ENCODE measurements at regions of chr2 and their contacts with region 1.

Region 1: DNA sequence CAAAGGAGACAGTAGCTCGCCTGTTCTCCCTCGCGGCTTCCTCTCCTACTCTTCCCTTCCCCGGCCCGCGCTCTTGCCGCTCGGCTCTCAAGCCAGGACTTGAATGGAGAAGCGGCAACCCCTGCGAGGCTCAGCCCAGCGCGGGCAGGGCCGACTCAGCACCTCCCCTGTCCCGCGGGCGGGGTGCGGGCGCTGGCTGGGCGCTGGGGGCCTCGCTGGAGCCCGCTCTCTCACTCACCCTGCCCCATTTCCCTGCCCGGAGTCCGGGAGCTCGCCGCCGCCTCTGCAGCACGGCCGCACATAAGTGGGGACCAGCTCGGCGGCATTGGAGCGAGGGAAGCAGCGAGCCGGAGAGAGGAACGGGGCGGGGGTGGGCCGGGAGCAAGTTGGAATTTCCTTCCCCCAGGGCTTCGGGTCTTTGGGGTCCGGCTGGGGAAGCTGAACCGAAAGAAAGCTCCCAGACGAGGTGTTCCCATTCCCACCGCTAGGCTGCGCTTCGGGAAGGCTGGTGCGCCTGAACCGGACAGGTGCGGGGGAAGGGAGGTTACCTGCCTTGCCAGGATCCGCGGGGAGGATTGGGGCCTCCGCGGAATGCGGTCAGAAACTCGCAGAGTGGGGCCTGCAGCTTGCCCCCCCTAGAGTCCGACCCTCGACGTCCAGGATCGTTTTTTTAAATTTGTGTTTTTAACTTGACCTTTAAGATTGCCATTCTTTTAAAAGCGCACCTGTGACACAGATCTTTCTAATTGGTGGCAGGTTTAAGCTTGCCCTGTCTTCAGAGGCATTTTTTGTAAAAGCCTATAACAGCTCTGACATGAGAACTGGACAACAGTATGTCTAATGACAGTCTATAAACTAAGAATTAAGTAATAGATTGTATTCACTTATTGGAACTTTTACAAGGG is at the start of gene COBLL1:
- DNase-seq: peak; percentile 82
- H3K4me3 ChIP-seq: peak within 1 kb of the TSS; percentile 72 to 92
- H3K27ac ChIP-seq: peak within 1 kb of the TSS; percentile 81 to 85
- H3K4me1 ChIP-seq: peaks cover 8 to 10% of the 10 kb centered on the region in 2 experiments; a peak in 3 of 4 replicates
- H3K27me3 ChIP-seq: no peaks in the 10 kb centered on the region
- CTCF ChIP-seq: peak; percentile 80
- EP300 ChIP-seq: no peak
- RAD21 ChIP-seq: peak; percentile 50
- polyA plus RNA-seq, gene COBLL1: 3.1 and 4.9 TPM in 2 replicates

Region 2: DNA sequence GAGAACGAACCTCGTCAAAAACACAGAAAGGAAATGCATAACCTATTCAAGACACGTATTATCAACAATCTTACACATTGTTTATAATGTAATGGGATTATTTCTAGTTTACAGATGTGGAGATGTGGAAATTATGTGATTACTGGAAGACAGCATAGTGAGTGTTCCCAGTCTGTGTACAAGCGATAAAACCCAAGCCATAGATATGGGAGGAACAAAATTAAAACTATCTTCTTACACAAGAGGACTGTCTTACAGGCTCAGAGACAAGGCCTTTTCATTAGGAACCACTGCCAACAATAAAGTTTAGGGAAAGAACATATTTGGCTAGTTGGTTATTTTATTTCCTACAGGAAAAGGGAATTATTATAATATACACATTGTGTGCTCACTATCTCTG is 20.6 kb before region 1 on chr2:
- CTCF ChIA-PET with region 1: interaction called, 22 read pairs
- POLR2A ChIA-PET with region 1: no interaction called
- DNase-seq: no peak
- H3K4me3 ChIP-seq: no peak overlapping the region
- H3K27ac ChIP-seq: no peak overlapping the region
- H3K4me1 ChIP-seq: peaks cover 2 to 22% of the 10 kb centered on the region in 2 experiments; a peak in 3 of 4 replicates
- H3K27me3 ChIP-seq: no peaks in the 10 kb centered on the region
- CTCF ChIP-seq: no peak
- EP300 ChIP-seq: no peak
- RAD21 ChIP-seq: no peak

Region 3: GRCh38 chr2:164831887-164832286 is 10.1 kb before region 1 on chr2:
- CTCF ChIA-PET with region 1: interaction called, 35 read pairs
- POLR2A ChIA-PET with region 1: interaction called, 3 read pairs
- DNase-seq: no peak
- H3K4me3 ChIP-seq: no peak overlapping the region
- H3K27ac ChIP-seq: no peak overlapping the region
- H3K4me1 ChIP-seq: peaks cover 1 to 2% of the 10 kb centered on the region in 2 experiments; a peak in 3 of 4 replicates
- H3K27me3 ChIP-seq: no peaks in the 10 kb centered on the region
- CTCF ChIP-seq: no peak
- EP300 ChIP-seq: no peak
- RAD21 ChIP-seq: no peak

Region 4: DNA sequence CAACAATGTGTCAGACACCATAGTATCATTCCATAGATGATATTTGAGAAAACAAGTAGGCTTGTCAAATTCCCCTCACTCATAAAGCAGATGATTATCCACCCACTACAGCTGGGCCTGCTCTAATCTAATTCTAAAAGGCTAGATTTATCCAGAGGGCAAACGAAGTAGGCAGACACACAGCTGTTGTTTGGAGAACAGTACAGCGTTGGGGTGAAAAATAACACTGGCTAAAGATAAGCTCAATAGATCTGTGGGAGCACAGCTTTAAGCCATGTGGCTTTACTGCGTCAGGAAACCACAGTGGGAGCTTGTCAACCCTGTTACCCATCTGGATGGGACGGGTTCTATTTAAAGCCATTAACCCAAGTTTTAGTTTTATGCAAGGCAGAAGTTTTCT is 48.6 kb after region 1 on chr2:
- CTCF ChIA-PET with region 1: interaction called, 15 read pairs
- POLR2A ChIA-PET with region 1: interaction called, 4 read pairs
- DNase-seq: peak; percentile 53
- H3K4me3 ChIP-seq: no peak overlapping the region
- H3K27ac ChIP-seq: peak overlapping the region in 1 of 2 experiments; percentile 24; a peak in 2 of 4 replicates
- H3K4me1 ChIP-seq: peaks cover 0 to 8% of the 10 kb centered on the region in 2 experiments; a peak in 2 of 4 replicates
- H3K27me3 ChIP-seq: no peaks in the 10 kb centered on the region
- CTCF ChIP-seq: no peak
- EP300 ChIP-seq: peak in 1 of 2 experiments; percentile 95; a peak in 2 of 4 replicates
- RAD21 ChIP-seq: peak; percentile 27

Region 5: DNA sequence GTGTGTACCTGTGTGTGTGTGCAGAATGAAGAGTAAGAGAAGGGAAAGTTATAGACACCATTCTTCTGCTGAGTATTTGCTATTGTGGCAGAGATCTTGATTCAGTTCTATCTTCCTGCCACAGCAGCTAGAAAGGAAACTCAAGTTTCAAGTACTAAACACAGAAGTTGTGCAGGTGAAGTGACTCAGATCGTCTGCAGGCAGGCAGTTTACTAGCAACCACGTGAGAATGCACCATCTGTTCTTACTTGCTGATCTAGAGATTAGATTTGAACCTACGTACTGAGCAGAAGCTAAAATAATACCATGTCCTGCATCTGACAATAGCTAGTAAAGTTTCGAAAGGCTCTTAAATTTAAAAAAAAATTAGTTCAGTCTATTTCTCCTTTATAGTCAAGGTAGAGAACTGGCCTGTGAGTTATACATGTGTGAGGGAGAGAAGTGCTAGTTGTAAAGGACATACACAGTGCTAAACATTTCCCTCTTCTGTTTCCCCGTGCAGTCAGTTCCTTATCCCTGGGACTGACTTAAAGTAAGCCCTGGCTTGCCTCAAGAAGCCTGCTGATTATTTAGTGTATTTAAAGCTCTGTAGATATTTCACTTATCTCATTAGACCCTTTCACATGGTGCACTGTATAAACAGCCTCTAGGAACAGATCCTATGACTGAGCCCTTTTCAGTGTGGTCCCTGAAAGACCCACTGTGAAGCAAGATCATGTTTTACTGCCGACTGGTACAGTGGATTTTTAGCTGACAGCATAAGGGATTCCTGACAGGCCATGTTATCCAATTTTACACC is 68.3 kb after region 1 on chr2:
- CTCF ChIA-PET with region 1: interaction called, 12 read pairs
- POLR2A ChIA-PET with region 1: no interaction called
- DNase-seq: no peak
- H3K4me3 ChIP-seq: no peak overlapping the region
- H3K27ac ChIP-seq: peak overlapping the region in 1 of 2 experiments; percentile 83; a peak in 2 of 4 replicates
- H3K4me1 ChIP-seq: peaks cover 0 to 18% of the 10 kb centered on the region in 2 experiments; a peak in 2 of 4 replicates
- H3K27me3 ChIP-seq: no peaks in the 10 kb centered on the region
- CTCF ChIP-seq: no peak
- EP300 ChIP-seq: peak; percentile 56 to 70; a peak in 3 of 4 replicates
- RAD21 ChIP-seq: no peak

Region 6: DNA sequence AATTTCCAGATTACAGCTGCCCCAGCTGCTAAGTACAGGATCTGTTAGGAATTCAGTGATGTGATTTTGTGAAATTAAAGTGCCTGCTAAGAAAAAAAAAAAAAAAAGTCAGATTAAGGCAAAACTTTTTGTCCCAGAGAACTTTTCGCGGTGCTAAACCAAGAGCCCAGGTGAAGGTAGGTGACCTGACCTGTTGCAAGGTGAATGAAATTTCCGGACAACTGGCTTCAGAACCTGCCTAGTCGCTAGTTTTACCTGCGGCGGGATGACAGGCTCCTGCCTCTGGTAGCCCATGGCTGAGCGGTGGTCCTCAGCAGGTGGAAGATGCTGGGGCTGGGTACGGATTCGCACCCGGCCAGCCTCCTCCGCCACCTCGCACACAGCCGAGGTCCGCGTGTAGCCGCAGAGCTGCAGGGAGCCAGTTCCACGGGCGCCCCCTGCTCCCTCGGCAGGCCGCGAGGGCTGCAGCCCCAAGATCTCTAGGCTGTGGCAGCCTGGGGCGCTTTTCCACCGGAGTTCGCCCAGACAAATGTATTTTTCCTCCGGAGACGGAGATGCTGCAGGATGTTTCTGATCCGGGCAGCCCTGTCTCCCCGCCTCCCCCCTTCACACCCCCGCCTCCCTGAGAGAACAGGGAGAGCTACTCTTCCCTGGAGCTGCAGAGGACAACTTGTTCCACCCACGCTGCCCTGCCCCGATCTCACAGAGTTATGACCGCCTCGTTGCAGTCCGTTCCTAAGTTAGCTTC is 113.2 kb after region 1 on chr2 and contains the start of gene SLC38A11:
- CTCF ChIA-PET with region 1: no interaction called
- POLR2A ChIA-PET with region 1: no interaction called
- DNase-seq: peak; percentile 65
- H3K4me3 ChIP-seq: peak within 1 kb of the TSS in 1 of 2 experiments; percentile 39; a peak in 2 of 4 replicates
- H3K27ac ChIP-seq: no peak within 1 kb of the TSS
- H3K4me1 ChIP-seq: peaks cover 3% of the 10 kb centered on the region in 2 experiments; a peak in 3 of 4 replicates
- H3K27me3 ChIP-seq: no peaks in the 10 kb centered on the region
- CTCF ChIP-seq: no peak
- EP300 ChIP-seq: no peak
- RAD21 ChIP-seq: no peak
- polyA plus RNA-seq, gene SLC38A11: not detected in 2 replicates

Measured in SK-N-SH (cell line).